B cell (primary cell): ENCODE measurements at regions of chr2 and their contacts with region 1.

Region 1: DNA sequence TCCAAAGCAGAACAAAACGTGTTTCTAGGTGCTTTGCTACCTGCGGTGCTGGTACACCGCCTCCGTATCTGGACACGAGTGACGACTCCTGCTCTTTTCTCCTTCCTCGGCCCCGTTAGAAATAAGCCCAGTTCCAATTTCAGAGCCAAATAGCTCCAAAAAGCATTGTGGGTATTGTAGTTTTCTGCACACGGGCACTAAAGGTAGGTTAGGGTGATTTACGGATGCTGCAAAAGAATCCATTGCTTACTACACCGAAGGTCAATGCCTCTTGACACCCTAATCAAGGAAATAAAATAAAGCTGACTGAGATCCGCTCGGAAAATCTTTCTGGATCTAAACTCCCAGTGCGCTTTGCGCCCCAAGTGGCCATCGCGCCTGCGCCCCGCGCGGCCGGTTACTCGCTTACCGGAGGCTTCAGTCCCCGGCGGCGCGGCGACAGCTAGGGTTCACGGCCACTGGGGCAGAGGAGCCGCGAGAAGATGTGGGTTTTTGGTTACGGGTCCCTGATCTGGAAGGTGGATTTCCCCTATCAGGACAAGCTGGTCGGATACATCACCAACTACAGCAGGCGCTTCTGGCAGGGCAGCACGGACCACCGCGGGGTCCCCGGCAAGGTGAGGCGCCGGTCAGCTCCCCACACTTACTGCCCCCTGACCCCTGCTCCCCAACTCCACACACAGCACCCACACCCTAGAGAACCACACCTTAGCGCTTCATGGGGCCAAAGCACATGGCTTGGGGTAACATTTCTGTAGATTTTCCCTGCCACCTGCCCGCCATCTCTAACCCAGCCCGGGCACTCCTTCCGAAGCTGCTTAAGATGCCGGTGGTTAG is at the start of gene CHAC2:
- DNase-seq: peak; percentile 93
- ATAC-seq: peak; percentile 93
- H3K4me3 ChIP-seq: peak within 1 kb of the TSS; percentile 81 to 99 (median 89)
- H3K4me3 Mint-ChIP-seq: peak within 1 kb of the TSS; percentile 89
- H3K27ac ChIP-seq: peak within 1 kb of the TSS; percentile 93 to 97
- H3K27ac Mint-ChIP-seq: peak within 1 kb of the TSS; percentile 95
- H3K4me1 ChIP-seq: peaks cover 7 to 10% of the 10 kb centered on the region in 2 donors
- H3K4me1 Mint-ChIP-seq: peaks cover 31% of the 10 kb centered on the region
- H3K27me3 ChIP-seq: no peaks in the 10 kb centered on the region
- H3K27me3 Mint-ChIP-seq: no peaks in the 10 kb centered on the region
- CTCF ChIP-seq: no peak
- total RNA-seq, gene CHAC2: 2.1 and 3.2 TPM in 2 replicates

Region 2: DNA sequence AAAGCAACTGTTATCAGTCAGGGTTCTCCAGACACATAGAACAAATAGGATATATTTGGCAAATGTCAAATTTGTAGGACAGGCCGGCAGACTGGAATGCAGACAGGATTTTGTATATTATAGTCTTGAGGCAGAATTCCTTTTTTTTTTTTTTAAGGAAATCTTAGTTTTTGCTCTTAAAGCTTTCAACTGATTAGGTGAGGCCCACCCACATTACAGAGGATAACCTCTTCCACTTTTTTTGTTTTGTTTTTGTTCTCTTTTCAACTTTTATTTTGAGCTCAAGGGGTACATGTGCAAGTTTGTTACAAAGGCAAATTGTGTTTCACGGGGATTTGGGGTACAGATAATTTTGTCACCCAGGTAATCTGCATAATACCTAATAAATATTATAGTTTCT is 350.2 kb before region 1 on chr2:
- CTCF ChIA-PET with region 1: no interaction called
- POLR2A ChIA-PET with region 1: no interaction called
- intact Hi-C with region 1: no loop called
- DNase-seq: no peak
- ATAC-seq: no peak
- H3K4me3 ChIP-seq: no peak overlapping the region
- H3K4me3 Mint-ChIP-seq: no peak overlapping the region
- H3K27ac ChIP-seq: no peak overlapping the region
- H3K27ac Mint-ChIP-seq: no peak overlapping the region
- H3K4me1 ChIP-seq: no peaks in the 10 kb centered on the region
- H3K4me1 Mint-ChIP-seq: no peaks in the 10 kb centered on the region
- H3K27me3 ChIP-seq: no peaks in the 10 kb centered on the region
- H3K27me3 Mint-ChIP-seq: no peaks in the 10 kb centered on the region
- CTCF ChIP-seq: no peak

Region 3: DNA sequence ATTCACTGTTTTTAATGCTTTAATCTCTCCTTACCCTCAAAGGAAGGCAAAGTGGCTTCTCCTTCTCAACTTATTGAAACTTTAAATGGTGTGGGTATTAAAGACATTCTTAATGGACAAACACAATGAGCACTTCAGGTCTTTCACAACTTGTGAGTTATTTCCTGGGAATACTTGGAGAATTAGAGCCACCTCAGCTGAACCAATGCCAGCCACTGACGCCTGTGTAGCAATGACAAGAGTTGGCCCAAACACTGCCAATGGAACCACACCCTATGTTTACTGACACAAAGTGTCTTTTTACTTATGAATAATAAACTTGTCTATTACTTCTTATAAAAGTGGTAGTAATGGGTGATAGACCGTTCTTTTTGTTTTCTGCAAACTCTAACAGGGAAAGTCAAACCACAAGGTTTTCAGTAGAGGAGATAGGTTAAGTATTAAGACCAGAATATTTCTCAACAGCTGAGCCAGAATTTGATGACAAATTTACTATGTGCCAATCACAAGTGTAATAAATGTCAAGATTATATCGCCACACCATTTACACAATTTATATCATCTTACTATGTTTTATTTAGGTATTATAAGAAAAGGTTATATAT is 12.5 kb before region 1 on chr2:
- CTCF ChIA-PET with region 1: no interaction called
- POLR2A ChIA-PET with region 1: interaction called, 14 read pairs
- intact Hi-C with region 1: no loop called
- DNase-seq: no peak
- ATAC-seq: no peak
- H3K4me3 ChIP-seq: no peak overlapping the region
- H3K4me3 Mint-ChIP-seq: no peak overlapping the region
- H3K27ac ChIP-seq: no peak overlapping the region
- H3K27ac Mint-ChIP-seq: no peak overlapping the region
- H3K4me1 ChIP-seq: no peaks in the 10 kb centered on the region
- H3K4me1 Mint-ChIP-seq: no peaks in the 10 kb centered on the region
- H3K27me3 ChIP-seq: no peaks in the 10 kb centered on the region
- H3K27me3 Mint-ChIP-seq: no peaks in the 10 kb centered on the region
- CTCF ChIP-seq: no peak

Region 4: GRCh38 chr2:53786705-53787612 is 19.3 kb after region 1 on chr2 and contains the starts of genes ASB3 and ERLEC1:
- CTCF ChIA-PET with region 1: interaction called, 16 read pairs
- POLR2A ChIA-PET with region 1: interaction called, 17 read pairs
- intact Hi-C with region 1: loop called (anchors 1 kb)
- DNase-seq: peak; percentile 92
- ATAC-seq: peak; percentile 92
- H3K4me3 ChIP-seq: peak within 1 kb of the TSS; percentile 77 to 98 (median 93)
- H3K4me3 Mint-ChIP-seq: peak within 1 kb of the TSS; percentile 98
- H3K27ac ChIP-seq: peak within 1 kb of the TSS; percentile 80 to 88
- H3K27ac Mint-ChIP-seq: peak within 1 kb of the TSS; percentile 92
- H3K4me1 ChIP-seq: peaks cover 29 to 33% of the 10 kb centered on the region in 2 donors
- H3K4me1 Mint-ChIP-seq: peaks cover 57% of the 10 kb centered on the region
- H3K27me3 ChIP-seq: no peaks in the 10 kb centered on the region
- H3K27me3 Mint-ChIP-seq: no peaks in the 10 kb centered on the region
- CTCF ChIP-seq: no peak
- total RNA-seq, gene ASB3: 30.7 and 38.4 TPM in 2 replicates
- total RNA-seq, gene ERLEC1: 22.9 and 24.5 TPM in 2 replicates

Region 5: DNA sequence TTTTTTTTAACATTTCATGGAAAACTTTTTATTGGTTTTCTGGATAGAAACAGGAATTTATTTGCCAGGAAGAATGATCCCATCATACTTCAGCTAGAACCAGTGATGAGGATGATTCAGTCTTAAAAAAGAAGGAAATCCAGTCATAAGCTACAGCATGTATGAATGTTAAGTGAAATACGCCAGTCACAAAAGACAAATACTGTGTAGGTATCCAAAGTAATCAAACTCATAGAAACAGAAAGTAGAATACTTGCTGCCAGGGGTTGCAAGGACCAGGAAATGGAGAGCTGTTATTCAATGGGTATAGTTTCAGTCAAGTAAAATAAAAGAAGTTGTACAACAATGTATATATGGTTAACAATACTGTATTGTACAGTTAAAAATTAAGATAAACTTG is 181.8 kb after region 1 on chr2:
- CTCF ChIA-PET with region 1: no interaction called
- POLR2A ChIA-PET with region 1: no interaction called
- intact Hi-C with region 1: no loop called
- DNase-seq: no peak
- ATAC-seq: no peak
- H3K4me3 ChIP-seq: no peak overlapping the region
- H3K4me3 Mint-ChIP-seq: peak overlapping the region; percentile 15
- H3K27ac ChIP-seq: peak overlapping the region in 1 of 2 donors; percentile 48
- H3K27ac Mint-ChIP-seq: peak overlapping the region; percentile 4
- H3K4me1 ChIP-seq: peaks cover 39 to 45% of the 10 kb centered on the region in 2 donors
- H3K4me1 Mint-ChIP-seq: peaks cover 61% of the 10 kb centered on the region
- H3K27me3 ChIP-seq: no peaks in the 10 kb centered on the region
- H3K27me3 Mint-ChIP-seq: no peaks in the 10 kb centered on the region
- CTCF ChIP-seq: no peak

Region 6: DNA sequence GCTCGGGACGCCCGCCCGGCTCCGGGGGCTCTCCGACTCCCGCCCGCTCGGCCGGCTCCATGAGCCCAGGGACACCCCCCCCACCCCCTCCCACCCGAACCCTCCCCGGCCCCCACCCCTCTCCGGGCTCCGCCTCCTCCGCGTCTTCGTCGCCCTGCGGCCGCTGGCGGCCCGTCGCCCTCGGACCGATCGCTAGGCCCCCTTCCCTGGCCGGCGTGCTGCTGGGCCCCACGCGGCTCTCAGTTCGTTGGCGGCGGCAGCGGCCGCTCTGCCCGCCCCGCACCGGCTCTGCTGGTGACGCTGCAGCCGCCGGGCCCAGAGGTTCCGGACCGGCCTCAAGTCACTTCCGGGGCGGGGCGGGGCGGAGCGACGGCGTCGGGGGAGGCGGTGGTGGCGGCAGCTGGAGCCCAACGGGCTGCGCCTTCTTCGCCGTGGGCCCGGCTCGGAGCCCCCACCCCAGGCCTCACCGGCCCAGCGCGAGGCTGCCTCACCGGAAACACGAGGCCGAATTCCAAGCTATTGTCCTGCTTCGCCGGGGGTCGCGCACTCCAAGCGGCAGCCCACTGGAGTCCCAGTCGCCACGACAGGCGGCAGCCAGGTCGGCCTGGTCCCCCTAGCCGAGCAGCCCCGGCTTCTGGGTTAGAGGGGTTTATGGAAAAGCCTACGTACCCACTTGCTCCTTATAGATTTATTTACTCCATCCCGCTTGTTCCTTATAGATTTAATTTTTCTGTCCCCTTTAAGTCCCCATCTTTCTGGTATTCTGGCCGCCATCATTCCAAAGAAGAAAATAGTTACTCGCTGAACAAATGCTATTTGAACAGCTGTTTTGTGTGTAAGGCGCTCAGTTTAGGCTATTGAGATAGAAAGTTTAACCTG is 203.3 kb after region 1 on chr2 and contains the start of gene PSME4:
- CTCF ChIA-PET with region 1: no interaction called
- POLR2A ChIA-PET with region 1: no interaction called
- intact Hi-C with region 1: loop called (anchors 10 kb)
- DNase-seq: peak; percentile 93
- ATAC-seq: peak; percentile 89
- H3K4me3 ChIP-seq: peak within 1 kb of the TSS; percentile 71 to 98 (median 95)
- H3K4me3 Mint-ChIP-seq: peak within 1 kb of the TSS; percentile 94
- H3K27ac ChIP-seq: peak within 1 kb of the TSS; percentile 71 to 89
- H3K27ac Mint-ChIP-seq: peak within 1 kb of the TSS; percentile 91
- H3K4me1 ChIP-seq: peaks cover 31 to 33% of the 10 kb centered on the region in 2 donors
- H3K4me1 Mint-ChIP-seq: peaks cover 47% of the 10 kb centered on the region
- H3K27me3 ChIP-seq: no peaks in the 10 kb centered on the region
- H3K27me3 Mint-ChIP-seq: no peaks in the 10 kb centered on the region
- CTCF ChIP-seq: no peak
- total RNA-seq, gene PSME4: 59.9 and 61.9 TPM in 2 replicates

Region 7: GRCh38 chr2:54115284-54116137 is 347.9 kb after region 1 on chr2 and contains the start of gene ACYP2:
- CTCF ChIA-PET with region 1: no interaction called
- POLR2A ChIA-PET with region 1: no interaction called
- intact Hi-C with region 1: loop called (anchors 10 kb)
- DNase-seq: peak; percentile 96
- ATAC-seq: peak; percentile 82
- H3K4me3 ChIP-seq: peak within 1 kb of the TSS; percentile 75 to 97 (median 85)
- H3K4me3 Mint-ChIP-seq: peak within 1 kb of the TSS; percentile 98
- H3K27ac ChIP-seq: peak within 1 kb of the TSS; percentile 97 to 99
- H3K27ac Mint-ChIP-seq: peak within 1 kb of the TSS; percentile 100
- H3K4me1 ChIP-seq: peaks cover 7% of the 10 kb centered on the region in 2 donors
- H3K4me1 Mint-ChIP-seq: peaks cover 16% of the 10 kb centered on the region
- H3K27me3 ChIP-seq: no peaks in the 10 kb centered on the region
- H3K27me3 Mint-ChIP-seq: no peaks in the 10 kb centered on the region
- CTCF ChIP-seq: no peak
- total RNA-seq, gene ACYP2: 14.0 and 16.4 TPM in 2 replicates

Region 8: GRCh38 chr2:55232084-55232862 is 1464.7 kb after region 1 on chr2 and contains the starts of genes CLHC1 and RPS27A:
- CTCF ChIA-PET with region 1: no interaction called
- POLR2A ChIA-PET with region 1: no interaction called
- intact Hi-C with region 1: loop called (anchors 1 kb)
- DNase-seq: peak; percentile 97
- ATAC-seq: peak; percentile 87
- H3K4me3 ChIP-seq: peak within 1 kb of the TSS; percentile 72 to 98 (median 94)
- H3K4me3 Mint-ChIP-seq: peak within 1 kb of the TSS; percentile 94
- H3K27ac ChIP-seq: peak within 1 kb of the TSS; percentile 95 to 98
- H3K27ac Mint-ChIP-seq: peak within 1 kb of the TSS; percentile 99
- H3K4me1 ChIP-seq: peaks cover 28 to 39% of the 10 kb centered on the region in 2 donors
- H3K4me1 Mint-ChIP-seq: peaks cover 54% of the 10 kb centered on the region
- H3K27me3 ChIP-seq: no peaks in the 10 kb centered on the region
- H3K27me3 Mint-ChIP-seq: no peaks in the 10 kb centered on the region
- CTCF ChIP-seq: no peak
- total RNA-seq, gene CLHC1: 12.0 and 12.8 TPM in 2 replicates
- total RNA-seq, gene RPS27A: 1,561 and 1,678 TPM in 2 replicates

Region 9: DNA sequence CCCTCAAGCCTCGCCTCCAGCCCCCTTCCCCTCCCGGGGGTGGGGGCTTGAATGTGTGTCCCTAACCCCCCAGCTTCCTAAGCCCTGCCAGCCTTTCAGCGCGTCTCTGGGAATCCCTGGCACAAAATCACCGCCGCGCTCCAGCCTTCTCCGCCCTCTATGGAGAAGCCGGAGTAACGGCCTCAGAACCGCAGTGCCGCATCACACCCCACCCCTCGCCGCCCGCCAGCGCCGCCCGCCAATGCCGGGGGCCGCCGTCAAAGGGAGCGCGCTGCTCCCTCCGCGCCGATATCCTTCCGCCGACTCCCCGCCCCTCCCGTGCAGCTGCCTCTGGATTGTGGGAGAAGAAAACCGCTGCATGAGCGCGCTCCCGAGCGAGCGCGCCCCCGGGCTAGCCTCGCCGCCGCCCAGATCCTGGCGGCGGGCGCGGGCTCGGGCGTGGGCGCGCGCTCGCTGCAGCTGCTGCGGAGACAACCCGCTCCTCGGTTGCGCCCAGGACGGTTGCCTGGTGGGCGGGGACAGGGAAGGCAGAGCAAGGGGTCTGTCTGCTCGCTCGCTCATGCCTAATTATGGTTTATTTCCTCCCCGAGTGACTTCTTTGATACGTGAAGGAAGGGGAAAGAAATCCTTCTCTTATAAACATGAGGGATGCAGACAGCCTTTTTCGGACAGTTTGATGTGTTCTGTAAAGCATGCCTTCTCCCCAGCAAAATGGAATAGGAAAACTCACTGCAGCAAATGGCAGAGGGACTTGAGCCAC is 1652.2 kb after region 1 on chr2 and contains the start of gene CCDC88A:
- CTCF ChIA-PET with region 1: no interaction called
- POLR2A ChIA-PET with region 1: no interaction called
- intact Hi-C with region 1: loop called (anchors 5 kb)
- DNase-seq: peak; percentile 95
- ATAC-seq: peak; percentile 85
- H3K4me3 ChIP-seq: peak within 1 kb of the TSS; percentile 65 to 91 (median 82)
- H3K4me3 Mint-ChIP-seq: peak within 1 kb of the TSS; percentile 95
- H3K27ac ChIP-seq: peak within 1 kb of the TSS; percentile 68 to 73
- H3K27ac Mint-ChIP-seq: peak within 1 kb of the TSS; percentile 95
- H3K4me1 ChIP-seq: peaks cover 20 to 25% of the 10 kb centered on the region in 2 donors
- H3K4me1 Mint-ChIP-seq: peaks cover 38% of the 10 kb centered on the region
- H3K27me3 ChIP-seq: peaks cover 0 to 4% (median 0%) of the 10 kb centered on the region in 4 experiments
- H3K27me3 Mint-ChIP-seq: no peaks in the 10 kb centered on the region
- CTCF ChIP-seq: no peak
- total RNA-seq, gene CCDC88A: 26.0 and 27.6 TPM in 2 replicates